B cell (primary cell): ENCODE measurements at regions of chr2 and their contacts with region 1.

Region 1: DNA sequence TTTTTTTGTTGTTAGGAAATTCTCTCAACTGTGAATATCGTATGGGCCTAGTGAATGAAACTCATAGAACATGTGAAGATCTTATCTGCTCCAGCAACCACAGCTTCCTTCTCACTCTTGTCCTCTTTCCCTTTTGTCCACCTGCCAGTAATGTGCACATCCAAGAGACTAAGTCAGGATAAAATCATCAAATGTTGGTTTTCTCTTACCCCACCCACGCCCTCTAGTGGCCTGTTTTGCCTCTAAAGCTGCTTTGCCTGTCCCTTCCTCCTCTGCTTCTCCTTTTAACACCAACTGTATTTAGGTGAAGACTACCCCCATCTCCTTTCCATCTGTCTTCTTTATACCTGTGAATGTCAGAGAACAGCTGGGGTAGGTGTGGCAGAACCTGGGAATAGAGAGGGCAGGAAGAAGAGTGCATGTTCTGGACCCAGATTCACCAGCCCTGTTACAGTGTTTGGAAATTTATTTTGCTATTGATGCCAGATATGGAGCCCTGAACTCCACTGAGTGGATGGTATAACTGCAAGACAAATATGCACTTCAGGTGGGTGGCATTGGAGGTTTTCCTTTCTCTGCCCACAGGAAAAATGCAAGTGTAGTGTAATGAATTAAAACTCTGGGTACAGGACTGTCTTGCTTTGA is 8.4 kb upstream of the MGAT5 start:
- DNase-seq: peak; percentile 84
- ATAC-seq: peak; percentile 55
- H3K4me3 ChIP-seq: peak overlapping the region in 2 of 5 experiments; percentile 6 to 12
- H3K4me3 Mint-ChIP-seq: peak overlapping the region; percentile 76
- H3K27ac ChIP-seq: peak overlapping the region; percentile 50 to 83
- H3K27ac Mint-ChIP-seq: peak overlapping the region; percentile 85
- H3K4me1 ChIP-seq: peaks cover 87 to 92% of the 10 kb centered on the region in 2 donors
- H3K4me1 Mint-ChIP-seq: peaks cover 92% of the 10 kb centered on the region
- H3K27me3 ChIP-seq: no peaks in the 10 kb centered on the region
- H3K27me3 Mint-ChIP-seq: no peaks in the 10 kb centered on the region
- CTCF ChIP-seq: peak; percentile 80

Region 2: DNA sequence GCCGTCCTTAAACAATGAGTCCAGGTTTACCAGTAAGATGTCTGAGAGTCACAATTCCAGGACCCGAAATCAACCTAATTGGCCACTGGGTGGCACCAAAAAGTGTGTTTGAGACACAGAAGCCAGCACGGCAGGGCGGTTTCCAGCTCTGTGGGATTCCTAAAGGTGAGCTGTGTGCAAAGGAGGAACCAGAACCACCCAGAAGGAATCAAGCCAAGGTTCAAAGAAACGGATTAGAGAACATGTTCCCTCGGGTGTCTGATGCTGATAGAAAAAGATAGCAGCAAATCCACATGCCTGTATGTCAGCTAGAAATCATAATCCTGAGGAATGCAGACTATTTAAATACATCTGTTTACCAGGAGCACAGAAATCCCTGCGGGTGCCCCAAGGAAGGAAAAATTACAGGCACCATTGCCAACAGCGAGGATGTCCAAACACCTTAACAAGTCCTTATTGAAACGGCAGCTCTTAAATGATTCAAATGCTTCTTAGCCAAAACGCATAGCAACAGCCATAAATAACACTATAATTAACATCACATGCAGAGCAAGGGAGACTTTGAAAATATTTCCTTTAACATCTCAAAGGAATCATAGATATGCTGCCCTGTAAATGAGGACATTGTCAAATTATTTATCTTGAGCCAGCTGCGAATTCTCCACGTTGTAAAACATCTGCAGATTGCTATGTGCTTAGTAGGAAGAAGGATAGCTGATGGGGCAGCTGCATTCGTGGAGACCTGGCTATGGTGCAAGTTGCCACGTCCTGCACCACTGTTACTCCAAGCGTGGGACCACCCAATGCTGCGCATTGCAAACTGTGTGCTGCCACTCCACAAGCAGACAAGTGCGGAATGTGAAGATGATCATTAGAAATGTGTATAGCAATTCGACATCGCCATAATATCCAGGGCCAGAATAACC is 358.5 kb before region 1 on chr2:
- CTCF ChIA-PET with region 1: interaction called, 89 read pairs
- POLR2A ChIA-PET with region 1: no interaction called
- intact Hi-C with region 1: loop called (anchors 1 kb)
- DNase-seq: peak; percentile 79
- ATAC-seq: peak; percentile 75
- H3K4me3 ChIP-seq: no peak overlapping the region
- H3K4me3 Mint-ChIP-seq: no peak overlapping the region
- H3K27ac ChIP-seq: no peak overlapping the region
- H3K27ac Mint-ChIP-seq: no peak overlapping the region
- H3K4me1 ChIP-seq: peaks cover 7 to 10% of the 10 kb centered on the region in 2 donors
- H3K4me1 Mint-ChIP-seq: peaks cover 13% of the 10 kb centered on the region
- H3K27me3 ChIP-seq: peaks cover 0 to 3% (median 0%) of the 10 kb centered on the region in 4 experiments
- H3K27me3 Mint-ChIP-seq: no peaks in the 10 kb centered on the region
- CTCF ChIP-seq: peak; percentile 85

Region 3: GRCh38 chr2:134181210-134181609 is 64.3 kb before region 1 on chr2:
- CTCF ChIA-PET with region 1: interaction called, 11 read pairs
- POLR2A ChIA-PET with region 1: interaction called, 6 read pairs
- intact Hi-C with region 1: no loop called
- DNase-seq: peak; percentile 69
- ATAC-seq: peak; percentile 85
- H3K4me3 ChIP-seq: no peak overlapping the region
- H3K4me3 Mint-ChIP-seq: peak overlapping the region; percentile 76
- H3K27ac ChIP-seq: peak overlapping the region; percentile 63 to 81
- H3K27ac Mint-ChIP-seq: peak overlapping the region; percentile 95
- H3K4me1 ChIP-seq: peaks cover 84 to 93% of the 10 kb centered on the region in 2 donors
- H3K4me1 Mint-ChIP-seq: peaks cover 91% of the 10 kb centered on the region
- H3K27me3 ChIP-seq: no peaks in the 10 kb centered on the region
- H3K27me3 Mint-ChIP-seq: no peaks in the 10 kb centered on the region
- CTCF ChIP-seq: peak; percentile 28

Region 4: DNA sequence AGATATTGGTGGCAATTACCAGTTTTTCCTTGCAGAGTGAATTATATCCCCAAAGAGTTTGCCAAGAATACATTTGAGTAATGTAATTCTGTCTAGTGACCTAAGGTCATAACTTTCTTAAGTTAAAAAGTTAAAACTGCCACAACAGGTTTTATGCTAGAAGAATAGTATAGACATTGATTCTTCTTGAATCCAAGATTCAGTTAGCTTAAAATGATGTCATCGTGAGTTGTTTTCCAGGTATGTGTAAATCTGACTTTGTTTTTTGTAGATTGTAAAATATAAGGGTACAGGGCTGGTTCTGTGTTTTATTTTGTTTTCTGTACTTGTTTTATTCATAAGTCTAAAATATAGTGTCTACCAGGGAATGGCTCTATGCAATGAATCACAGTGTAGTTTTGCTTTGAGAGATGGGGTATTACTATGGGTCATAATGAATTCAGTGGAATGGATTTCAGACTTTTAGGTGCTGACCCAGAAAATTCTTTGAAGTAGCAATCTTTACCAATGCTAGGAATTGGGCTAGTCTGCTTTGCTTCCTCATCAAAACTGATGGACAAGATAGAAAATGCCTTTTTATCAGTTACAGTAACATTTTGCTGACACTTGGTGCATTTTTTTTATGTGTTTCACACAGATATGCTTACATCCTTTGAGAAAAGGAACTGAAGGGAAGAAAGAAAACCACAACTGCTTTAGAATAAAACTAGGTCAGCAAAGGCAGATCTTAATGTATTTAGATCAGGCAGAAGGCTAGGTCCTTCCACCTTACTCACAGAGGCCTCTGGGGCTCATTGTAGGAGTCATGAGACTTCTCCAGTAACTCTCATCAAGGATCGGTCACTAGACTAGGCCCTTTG is 12.4 kb before region 1 on chr2:
- CTCF ChIA-PET with region 1: interaction called, 46 read pairs
- POLR2A ChIA-PET with region 1: interaction called, 5 read pairs
- intact Hi-C with region 1: loop called (anchors 1 kb)
- DNase-seq: peak; percentile 63
- ATAC-seq: peak; percentile 31
- H3K4me3 ChIP-seq: peak overlapping the region in 3 of 5 experiments; percentile 7 to 48 (median 30)
- H3K4me3 Mint-ChIP-seq: peak overlapping the region; percentile 55
- H3K27ac ChIP-seq: peak overlapping the region; percentile 63 to 79
- H3K27ac Mint-ChIP-seq: peak overlapping the region; percentile 87
- H3K4me1 ChIP-seq: peaks cover 76% of the 10 kb centered on the region in 2 donors
- H3K4me1 Mint-ChIP-seq: peaks cover 88% of the 10 kb centered on the region
- H3K27me3 ChIP-seq: no peaks in the 10 kb centered on the region
- H3K27me3 Mint-ChIP-seq: no peaks in the 10 kb centered on the region
- CTCF ChIP-seq: no peak

Region 5: DNA sequence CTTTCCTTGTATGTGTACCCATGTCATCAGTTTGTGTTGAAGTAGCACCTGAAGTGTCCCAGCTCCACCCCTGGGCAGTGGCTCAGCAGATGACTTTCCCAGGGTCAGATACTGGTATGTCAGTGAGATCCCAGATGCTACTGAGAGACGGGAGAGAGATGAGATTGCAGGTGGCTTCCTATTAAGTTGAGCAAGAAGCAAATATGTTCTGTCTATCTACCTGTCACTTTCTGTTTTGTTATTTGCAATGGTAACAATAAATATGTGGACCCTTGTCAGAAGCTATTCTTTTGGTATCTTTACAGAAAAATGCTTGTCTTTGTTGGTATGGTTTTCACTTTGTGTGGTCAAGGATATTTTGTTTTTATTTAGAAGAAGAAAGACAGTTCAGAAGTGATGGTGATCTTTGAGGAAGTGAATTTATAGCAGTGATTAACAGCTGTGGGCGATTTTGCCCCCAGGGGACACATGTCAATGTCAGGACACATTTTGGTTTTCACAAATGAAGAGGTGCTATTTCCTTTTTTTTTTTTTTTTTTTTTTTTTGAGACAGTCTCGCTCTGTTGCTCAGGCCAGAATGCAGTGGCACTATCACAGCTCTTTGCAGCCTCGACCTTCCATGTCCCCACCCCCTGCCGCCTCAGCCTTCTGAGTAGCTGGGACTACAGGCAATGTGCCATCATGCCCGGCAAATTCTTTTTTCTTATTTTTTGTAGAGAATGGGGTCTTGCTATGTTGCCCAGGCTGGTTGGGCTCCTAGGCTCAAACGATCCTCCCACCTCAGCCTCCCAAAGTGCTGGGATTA is 29.8 kb after region 1 on chr2:
- CTCF ChIA-PET with region 1: interaction called, 54 read pairs
- POLR2A ChIA-PET with region 1: interaction called, 4 read pairs
- intact Hi-C with region 1: no loop called
- DNase-seq: peak; percentile 93
- ATAC-seq: peak; percentile 91
- H3K4me3 ChIP-seq: peak overlapping the region in 4 of 5 experiments; percentile 6 to 57 (median 26)
- H3K4me3 Mint-ChIP-seq: peak overlapping the region; percentile 90
- H3K27ac ChIP-seq: peak overlapping the region; percentile 77 to 80
- H3K27ac Mint-ChIP-seq: peak overlapping the region; percentile 96
- H3K4me1 ChIP-seq: peaks cover 97% of the 10 kb centered on the region in 2 donors
- H3K4me1 Mint-ChIP-seq: peaks cover 97% of the 10 kb centered on the region
- H3K27me3 ChIP-seq: no peaks in the 10 kb centered on the region
- H3K27me3 Mint-ChIP-seq: no peaks in the 10 kb centered on the region
- CTCF ChIP-seq: no peak

Region 6: DNA sequence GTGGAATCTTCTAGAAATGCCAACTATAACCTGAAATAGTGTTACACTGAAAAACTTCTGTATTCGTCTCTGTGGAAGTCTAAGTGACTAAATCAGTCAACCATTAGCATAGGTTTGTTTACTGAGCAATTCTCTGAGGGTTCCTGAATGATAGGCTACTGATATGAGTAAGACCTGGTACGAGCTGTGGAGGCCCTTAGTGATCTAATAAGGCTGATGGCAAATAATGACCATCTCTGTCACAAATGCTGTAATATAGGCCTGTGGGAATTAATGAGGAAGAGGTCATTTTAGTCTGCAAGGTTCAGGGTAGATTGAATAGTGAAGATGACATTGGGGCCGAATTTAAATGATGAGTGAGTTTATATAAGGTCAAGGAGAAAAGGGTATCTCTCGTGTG is 90.9 kb after region 1 on chr2:
- CTCF ChIA-PET with region 1: interaction called, 18 read pairs
- POLR2A ChIA-PET with region 1: no interaction called
- intact Hi-C with region 1: no loop called
- DNase-seq: no peak
- ATAC-seq: no peak
- H3K4me3 ChIP-seq: no peak overlapping the region
- H3K4me3 Mint-ChIP-seq: no peak overlapping the region
- H3K27ac ChIP-seq: peak overlapping the region in 1 of 2 donors; percentile 42
- H3K27ac Mint-ChIP-seq: peak overlapping the region; percentile 64
- H3K4me1 ChIP-seq: peaks cover 9 to 24% of the 10 kb centered on the region in 2 donors
- H3K4me1 Mint-ChIP-seq: peaks cover 65% of the 10 kb centered on the region
- H3K27me3 ChIP-seq: no peaks in the 10 kb centered on the region
- H3K27me3 Mint-ChIP-seq: no peaks in the 10 kb centered on the region
- CTCF ChIP-seq: no peak

Region 7: DNA sequence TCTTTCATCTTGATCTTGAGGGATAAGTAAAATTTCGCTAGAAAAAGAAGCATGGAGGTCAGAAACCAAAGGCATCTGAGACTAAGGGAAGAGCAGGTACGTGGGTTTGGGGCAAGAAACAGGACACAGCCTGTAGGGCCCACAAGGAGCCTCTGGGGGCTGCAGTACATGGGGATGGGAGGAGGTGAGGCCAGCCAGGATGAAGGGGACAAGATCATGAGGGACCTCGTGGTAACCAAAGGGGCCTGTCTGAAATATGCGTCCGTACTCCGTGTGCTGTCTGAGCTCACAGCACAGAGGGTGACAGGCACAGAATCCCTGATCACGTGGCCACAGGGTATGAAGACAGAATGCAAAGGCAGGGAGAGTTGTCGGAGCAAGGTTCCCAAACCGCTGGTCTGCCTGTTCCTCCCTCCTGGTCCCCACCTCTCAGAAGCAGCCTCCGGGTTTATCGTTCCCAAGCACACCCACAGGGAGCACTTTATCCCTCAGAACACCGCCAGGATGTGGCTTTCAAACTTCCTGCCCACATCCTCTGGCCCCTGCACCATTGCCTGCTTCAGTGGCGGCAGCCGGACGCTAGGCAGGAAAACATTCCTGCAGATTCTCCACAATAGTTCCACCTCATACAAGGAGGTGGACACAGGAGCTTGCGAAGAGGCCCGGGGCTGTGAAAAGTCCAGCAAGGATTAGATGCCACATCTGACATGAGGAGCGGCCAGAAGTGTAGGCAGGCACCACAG is 461.3 kb after region 1 on chr2:
- CTCF ChIA-PET with region 1: no interaction called
- POLR2A ChIA-PET with region 1: no interaction called
- intact Hi-C with region 1: no loop called
- DNase-seq: no peak
- ATAC-seq: peak; percentile 31
- H3K4me3 ChIP-seq: peak overlapping the region in 1 of 5 experiments; percentile 12
- H3K4me3 Mint-ChIP-seq: peak overlapping the region; percentile 74
- H3K27ac ChIP-seq: no peak overlapping the region
- H3K27ac Mint-ChIP-seq: no peak overlapping the region
- H3K4me1 ChIP-seq: peaks cover 18 to 23% of the 10 kb centered on the region in 2 donors
- H3K4me1 Mint-ChIP-seq: peaks cover 37% of the 10 kb centered on the region
- H3K27me3 ChIP-seq: peaks cover 0 to 32% (median 2%) of the 10 kb centered on the region in 4 experiments
- H3K27me3 Mint-ChIP-seq: peaks cover 12% of the 10 kb centered on the region
- CTCF ChIP-seq: no peak